Gastrocnemius medialis (tissue), 4 donors: ENCODE measurements at regions of chr18 and their contacts with region 1.

Region 1: GRCh38 chr18:24426398-24427294 is at the start of gene IMPACT:
- DNase-seq: peak; percentile 50 to 64
- ATAC-seq: peak; percentile 91 to 93
- H3K4me3 ChIP-seq: peak within 1 kb of the TSS; percentile 69 to 92 (median 80)
- H3K27ac ChIP-seq: peak within 1 kb of the TSS; percentile 46 to 81 (median 72)
- H3K4me1 ChIP-seq: peaks cover 7 to 11% of the 10 kb centered on the region in 2 donors
- H3K27me3 ChIP-seq: peaks cover 12 to 37% (median 15%) of the 10 kb centered on the region in 3 donors
- CTCF ChIP-seq: no peak
- POLR2A ChIP-seq: peak; percentile 30
- total RNA-seq, gene IMPACT: 9.1 to 18.7 (median 11.9) TPM

Region 2: GRCh38 chr18:24346254-24346653 is 80.4 kb before region 1 on chr18:
- in situ Hi-C with region 1: loop called in 1 of 4 experiments (anchors 25 kb)
- intact Hi-C with region 1: no loop called
- DNase-seq: no peak
- ATAC-seq: no peak
- H3K4me3 ChIP-seq: no peak overlapping the region
- H3K27ac ChIP-seq: no peak overlapping the region
- H3K4me1 ChIP-seq: no peaks in the 10 kb centered on the region
- H3K27me3 ChIP-seq: no peaks in the 10 kb centered on the region
- CTCF ChIP-seq: no peak
- POLR2A ChIP-seq: no peak

Region 3: GRCh38 chr18:24397694-24398365 is 28.8 kb before region 1 on chr18 and contains the start of gene OSBPL1A:
- in situ Hi-C with region 1: no loop called
- intact Hi-C with region 1: loop called (anchors 2 kb)
- DNase-seq: peak; percentile 71 to 73
- ATAC-seq: peak; percentile 69 to 83
- H3K4me3 ChIP-seq: peak within 1 kb of the TSS; percentile 61 to 82 (median 67)
- H3K27ac ChIP-seq: peak within 1 kb of the TSS; percentile 64 to 79 (median 72)
- H3K4me1 ChIP-seq: peaks cover 5 to 9% of the 10 kb centered on the region in 2 donors
- H3K27me3 ChIP-seq: peaks cover 28 to 32% (median 30%) of the 10 kb centered on the region in 3 donors
- CTCF ChIP-seq: no peak
- POLR2A ChIP-seq: peak; percentile 28 to 67
- total RNA-seq, gene OSBPL1A: 61.5 to 227 (median 98.7) TPM